Caco-2 (cell line): ENCODE measurements at regions of chr12 and their contacts with region 1.

Region 1: DNA sequence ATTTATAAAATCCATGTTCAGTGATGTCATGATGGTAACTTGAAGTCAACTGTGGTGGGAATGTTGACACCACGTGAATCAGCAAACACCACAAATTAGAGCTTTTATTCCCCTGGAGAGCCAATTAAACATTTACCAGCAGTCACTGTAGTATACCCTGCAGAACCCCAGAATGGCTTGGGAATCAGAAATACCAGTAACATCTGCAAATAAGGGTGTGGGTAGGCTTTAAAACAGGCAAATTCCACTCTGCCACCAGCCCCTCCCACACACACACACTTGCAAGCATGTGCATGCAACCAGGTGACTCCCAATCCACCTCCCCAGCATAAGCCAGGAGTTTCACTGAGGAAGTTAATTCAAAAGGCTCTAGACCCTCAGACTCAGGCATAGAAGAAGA is 63.6 kb upstream of the TMEM263 start:
- DNase-seq: peak; percentile 80 to 88
- H3K4me3 ChIP-seq: no peak overlapping the region
- H3K4me3 Mint-ChIP-seq: peak overlapping the region; percentile 34
- H3K27ac Mint-ChIP-seq: peak overlapping the region; percentile 19
- H3K4me1 ChIP-seq: peaks cover 26% of the 10 kb centered on the region
- H3K4me1 Mint-ChIP-seq: peaks cover 18% of the 10 kb centered on the region
- H3K27me3 ChIP-seq: no peaks in the 10 kb centered on the region
- H3K27me3 Mint-ChIP-seq: no peaks in the 10 kb centered on the region
- CTCF ChIP-seq: no peak

Region 2: DNA sequence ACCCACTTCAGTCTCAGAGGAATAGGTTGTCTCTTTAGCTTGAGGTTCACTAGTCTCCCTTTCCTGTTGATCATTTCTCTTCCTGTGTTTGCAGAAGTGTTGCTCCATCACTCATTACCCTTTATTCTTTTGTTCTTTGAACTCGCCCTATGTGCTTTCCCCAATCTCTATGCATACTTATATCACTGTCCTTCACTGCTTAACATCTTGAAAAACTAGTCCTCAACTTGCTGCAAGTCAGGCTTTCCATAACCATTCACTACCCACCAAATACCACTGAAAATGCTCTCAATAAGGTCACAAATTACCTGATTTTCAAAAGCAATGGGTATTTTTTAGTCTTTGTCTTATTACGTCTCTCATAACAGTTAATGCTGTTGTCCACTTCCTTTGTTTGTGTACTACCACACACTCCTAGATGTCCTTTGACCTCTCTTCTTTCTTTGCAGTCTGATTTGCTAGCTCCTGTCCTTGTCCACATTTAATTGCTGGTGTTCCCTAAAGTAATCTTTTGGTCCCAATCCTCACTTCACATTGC is 36.8 kb before region 1 on chr12:
- CTCF ChIA-PET with region 1: no interaction called
- POLR2A ChIA-PET with region 1: no interaction called
- intact Hi-C with region 1: loop called (anchors 5 kb)
- DNase-seq: peak in 1 of 2 experiments; percentile 23
- H3K4me3 ChIP-seq: no peak overlapping the region
- H3K4me3 Mint-ChIP-seq: no peak overlapping the region
- H3K27ac Mint-ChIP-seq: no peak overlapping the region
- H3K4me1 ChIP-seq: peaks cover 32% of the 10 kb centered on the region
- H3K4me1 Mint-ChIP-seq: no peaks in the 10 kb centered on the region
- H3K27me3 ChIP-seq: no peaks in the 10 kb centered on the region
- H3K27me3 Mint-ChIP-seq: no peaks in the 10 kb centered on the region
- CTCF ChIP-seq: no peak

Region 3: DNA sequence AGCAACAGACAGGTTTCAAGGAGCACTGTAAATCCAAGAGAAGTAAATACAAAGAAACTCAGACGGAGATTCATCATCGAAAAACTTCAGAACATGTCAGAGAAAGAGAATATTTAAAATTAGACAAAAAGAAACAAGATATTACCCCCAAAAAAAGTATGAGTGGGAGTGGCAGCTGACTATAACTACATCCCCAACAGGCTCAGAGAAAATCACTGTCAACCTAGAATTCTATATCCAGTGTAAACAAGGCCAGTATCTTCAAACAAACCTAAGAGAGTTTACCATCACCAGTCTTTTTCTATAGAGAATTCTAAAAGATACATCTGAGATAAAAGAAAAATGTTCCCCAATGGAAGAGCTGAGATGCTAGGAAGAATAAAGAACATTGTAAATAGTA is 161.6 kb after region 1 on chr12:
- CTCF ChIA-PET with region 1: no interaction called
- POLR2A ChIA-PET with region 1: no interaction called
- intact Hi-C with region 1: no loop called
- DNase-seq: no peak
- H3K4me3 ChIP-seq: no peak overlapping the region
- H3K4me3 Mint-ChIP-seq: no peak overlapping the region
- H3K27ac Mint-ChIP-seq: no peak overlapping the region
- H3K4me1 ChIP-seq: no peaks in the 10 kb centered on the region
- H3K4me1 Mint-ChIP-seq: peaks cover 16% of the 10 kb centered on the region
- H3K27me3 ChIP-seq: no peaks in the 10 kb centered on the region
- H3K27me3 Mint-ChIP-seq: no peaks in the 10 kb centered on the region
- CTCF ChIP-seq: no peak